MCF 10A (cell line): ENCODE measurements at regions of chr6 and their contacts with region 1.

Region 1: GRCh38 chr6:33425668-33426577 is 6.1 kb downstream of the SYNGAP1 start:
- DNase-seq: peak; percentile 83
- H3K4me3 Mint-ChIP-seq: peak overlapping the region; percentile 97
- H3K27ac Mint-ChIP-seq: peak overlapping the region; percentile 85
- H3K4me1 Mint-ChIP-seq: peaks cover 61% of the 10 kb centered on the region
- H3K27me3 Mint-ChIP-seq: no peaks in the 10 kb centered on the region
- CTCF ChIP-seq: peak; percentile 68

Region 2: DNA sequence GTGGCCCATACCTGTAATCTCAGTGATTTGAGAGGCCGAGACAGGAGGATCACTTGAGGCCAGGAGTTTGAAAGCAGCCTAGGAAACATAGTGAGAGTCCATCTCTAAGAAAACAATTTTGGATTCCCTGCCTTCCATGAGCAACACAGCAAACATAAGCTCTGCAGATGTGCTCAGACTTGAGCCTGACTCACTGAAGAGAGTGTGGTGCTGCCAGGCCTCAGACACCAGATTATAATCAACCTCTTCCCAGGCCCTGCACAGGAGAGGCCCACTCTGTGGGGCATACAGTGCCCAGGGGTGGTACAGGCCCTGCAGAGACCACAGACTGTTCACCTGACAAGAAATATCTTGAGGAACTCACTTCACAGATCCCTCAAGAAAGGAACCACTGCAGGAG is 330.2 kb before region 1 on chr6:
- CTCF ChIA-PET with region 1: no interaction called
- POLR2A ChIA-PET with region 1: no interaction called
- intact Hi-C with region 1: no loop called
- DNase-seq: no peak
- H3K4me3 Mint-ChIP-seq: no peak overlapping the region
- H3K27ac Mint-ChIP-seq: no peak overlapping the region
- H3K4me1 Mint-ChIP-seq: no peaks in the 10 kb centered on the region
- H3K27me3 Mint-ChIP-seq: peaks cover 90% of the 10 kb centered on the region
- CTCF ChIP-seq: no peak

Region 3: DNA sequence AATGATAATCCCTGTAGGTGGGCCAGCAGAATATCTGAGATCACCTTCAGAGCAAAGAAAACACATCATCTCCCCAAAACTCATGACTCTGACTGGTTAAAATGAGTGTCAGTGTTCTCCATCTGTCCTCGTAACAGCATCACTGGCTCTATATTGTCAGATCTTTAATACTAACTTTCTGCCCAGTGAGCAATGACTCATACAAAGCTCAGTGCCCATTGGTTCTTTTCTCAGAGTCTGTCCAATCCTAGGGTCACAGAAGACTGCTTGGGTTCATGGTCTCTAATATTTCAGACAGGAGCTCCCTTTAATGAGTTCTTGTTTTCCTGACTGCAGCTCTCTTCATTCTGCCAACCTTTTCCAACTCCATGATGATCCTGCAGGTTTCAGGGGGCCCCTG is 313.8 kb before region 1 on chr6:
- CTCF ChIA-PET with region 1: no interaction called
- POLR2A ChIA-PET with region 1: no interaction called
- intact Hi-C with region 1: no loop called
- DNase-seq: peak; percentile 65
- H3K4me3 Mint-ChIP-seq: no peak overlapping the region
- H3K27ac Mint-ChIP-seq: no peak overlapping the region
- H3K4me1 Mint-ChIP-seq: no peaks in the 10 kb centered on the region
- H3K27me3 Mint-ChIP-seq: peaks cover 97% of the 10 kb centered on the region
- CTCF ChIP-seq: no peak

Region 4: GRCh38 chr6:33299237-33299944 is 126.5 kb before region 1 on chr6:
- CTCF ChIA-PET with region 1: interaction called, 5 read pairs
- POLR2A ChIA-PET with region 1: interaction called, 7 read pairs
- intact Hi-C with region 1: loop called (anchors 5 kb)
- DNase-seq: peak; percentile 93
- H3K4me3 Mint-ChIP-seq: peak overlapping the region; percentile 96
- H3K27ac Mint-ChIP-seq: peak overlapping the region; percentile 100
- H3K4me1 Mint-ChIP-seq: peaks cover 28% of the 10 kb centered on the region
- H3K27me3 Mint-ChIP-seq: no peaks in the 10 kb centered on the region
- CTCF ChIP-seq: peak; percentile 64

Region 5: GRCh38 chr6:33391278-33391921 is 34.5 kb before region 1 on chr6 and contains the start of gene KIFC1:
- CTCF ChIA-PET with region 1: interaction called, 5 read pairs
- POLR2A ChIA-PET with region 1: interaction called, 9 read pairs
- intact Hi-C with region 1: loop called (anchors 1 kb)
- DNase-seq: peak; percentile 99
- H3K4me3 Mint-ChIP-seq: peak within 1 kb of the TSS; percentile 81
- H3K27ac Mint-ChIP-seq: peak within 1 kb of the TSS; percentile 72
- H3K4me1 Mint-ChIP-seq: peaks cover 37% of the 10 kb centered on the region
- H3K27me3 Mint-ChIP-seq: no peaks in the 10 kb centered on the region
- CTCF ChIP-seq: peak; percentile 89
- total RNA-seq, gene KIFC1: 20.3 and 27.1 TPM in 2 replicates

Region 6: DNA sequence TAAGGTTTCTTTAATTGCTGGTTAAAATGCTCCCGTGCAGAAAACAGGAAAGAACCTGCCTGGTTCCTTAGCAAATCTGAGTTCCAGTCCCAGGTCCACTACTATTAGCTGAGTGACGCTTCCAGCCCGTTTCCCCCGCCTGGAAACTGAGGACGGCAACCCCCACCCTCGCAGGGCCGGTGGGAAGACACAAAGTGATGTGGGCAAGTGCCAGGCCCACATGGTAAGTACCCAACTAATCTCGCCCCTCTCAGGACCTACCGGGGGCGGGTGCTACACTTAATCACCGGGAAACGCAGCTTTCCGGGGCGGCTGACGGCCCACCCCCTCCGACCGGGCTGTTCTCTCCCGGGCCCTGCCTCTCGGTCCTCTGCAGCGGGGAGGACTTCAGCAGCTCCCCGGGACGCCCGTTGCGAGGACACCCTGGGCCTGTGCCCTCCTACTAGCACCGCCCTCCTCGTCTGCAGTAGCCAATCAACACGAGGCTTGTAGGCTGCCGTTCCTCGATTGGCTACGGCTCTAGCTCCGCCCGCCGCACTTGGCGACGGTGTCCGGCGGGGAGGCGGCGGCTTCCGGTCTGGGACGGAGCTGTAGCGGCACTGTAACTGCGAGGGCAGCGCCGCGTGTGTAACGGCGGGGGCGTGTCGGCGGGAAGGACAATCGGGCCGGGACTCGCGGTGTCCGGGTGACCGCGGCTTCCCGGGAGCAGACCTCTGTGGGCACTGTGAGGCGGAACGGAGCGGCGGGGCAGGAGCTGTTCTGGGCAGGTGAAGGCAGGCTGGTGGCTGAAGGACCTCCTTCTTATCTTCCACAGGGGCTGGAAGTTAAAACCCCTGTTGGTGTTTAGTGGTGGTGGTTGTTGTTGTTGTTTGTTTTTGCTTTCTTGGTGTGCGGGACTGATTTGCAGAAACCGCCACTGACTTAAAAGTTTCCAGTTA is 28.4 kb after region 1 on chr6 and contains the start of gene ZBTB9:
- CTCF ChIA-PET with region 1: interaction called, 4 read pairs
- POLR2A ChIA-PET with region 1: interaction called, 23 read pairs
- intact Hi-C with region 1: no loop called
- DNase-seq: peak; percentile 95
- H3K4me3 Mint-ChIP-seq: peak within 1 kb of the TSS; percentile 89
- H3K27ac Mint-ChIP-seq: peak within 1 kb of the TSS; percentile 72
- H3K4me1 Mint-ChIP-seq: peaks cover 22% of the 10 kb centered on the region
- H3K27me3 Mint-ChIP-seq: no peaks in the 10 kb centered on the region
- CTCF ChIP-seq: no peak
- total RNA-seq, gene ZBTB9: 7.5 and 8.3 TPM in 2 replicates

Region 7: DNA sequence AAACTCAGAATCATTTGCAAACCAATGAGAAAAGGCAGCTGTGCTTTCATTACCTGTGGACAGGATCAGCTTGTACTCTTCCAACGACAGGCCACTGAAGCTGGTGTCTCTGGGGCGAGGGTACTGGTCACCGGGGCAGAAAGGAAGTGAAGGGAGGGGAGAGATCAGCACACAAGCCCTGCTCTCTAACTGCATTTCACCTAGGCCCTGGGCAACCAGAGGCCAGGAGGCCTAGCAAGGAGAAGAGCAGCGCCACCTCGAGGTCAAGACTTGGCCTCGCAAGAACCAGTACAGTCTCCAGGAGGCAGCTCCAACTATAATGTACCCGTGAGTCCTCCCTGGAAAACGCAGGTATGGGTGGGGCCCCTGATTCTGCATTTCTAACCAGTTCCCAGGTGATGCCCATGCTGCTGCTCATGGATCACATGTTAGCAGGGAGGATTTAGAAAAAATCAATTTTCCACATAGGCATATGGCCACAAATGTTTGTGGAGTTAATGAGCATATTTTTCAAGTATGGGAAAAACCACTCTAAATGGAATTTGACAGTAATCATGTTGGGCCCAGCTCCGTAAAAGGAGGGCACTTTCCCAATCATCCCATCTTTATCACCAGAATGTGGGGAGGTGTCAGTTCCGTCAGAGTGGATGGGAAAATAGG is 274.6 kb after region 1 on chr6:
- CTCF ChIA-PET with region 1: no interaction called
- POLR2A ChIA-PET with region 1: no interaction called
- intact Hi-C with region 1: loop called (anchors 10 kb)
- DNase-seq: peak; percentile 85
- H3K4me3 Mint-ChIP-seq: no peak overlapping the region
- H3K27ac Mint-ChIP-seq: no peak overlapping the region
- H3K4me1 Mint-ChIP-seq: peaks cover 19% of the 10 kb centered on the region
- H3K27me3 Mint-ChIP-seq: no peaks in the 10 kb centered on the region
- CTCF ChIP-seq: peak; percentile 69